ENCODE measurements at regions of chr5 and their contacts with region 1.

Region 1: DNA sequence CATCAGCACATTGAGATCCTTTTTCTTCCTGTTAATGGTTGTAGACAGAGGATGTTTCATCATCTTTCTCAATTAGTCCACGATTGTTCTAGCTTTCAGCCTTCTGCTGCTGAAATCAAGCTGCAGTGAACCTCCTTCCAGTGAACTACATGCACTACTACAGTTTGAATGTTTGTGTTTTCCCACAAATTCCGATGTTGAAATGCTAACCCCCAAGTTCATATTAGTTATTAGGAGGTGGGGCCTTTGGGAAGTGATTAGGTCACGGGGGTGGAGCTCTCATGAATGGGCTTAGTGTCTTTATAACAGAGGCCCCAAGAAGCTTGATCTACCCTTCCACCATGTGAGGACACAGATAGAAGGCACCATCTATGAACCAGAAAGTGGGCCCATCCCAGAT is 32.9 kb downstream of the NSG2 start:
- DNase-seq: no peak
- ATAC-seq: no peak
- H3K4me3 ChIP-seq: no peak overlapping the region
- H3K27ac ChIP-seq: no peak overlapping the region
- H3K4me1 ChIP-seq: no peaks in the 10 kb centered on the region
- H3K27me3 ChIP-seq: no peaks in the 10 kb centered on the region
- CTCF ChIP-seq: no peak

Region 2: DNA sequence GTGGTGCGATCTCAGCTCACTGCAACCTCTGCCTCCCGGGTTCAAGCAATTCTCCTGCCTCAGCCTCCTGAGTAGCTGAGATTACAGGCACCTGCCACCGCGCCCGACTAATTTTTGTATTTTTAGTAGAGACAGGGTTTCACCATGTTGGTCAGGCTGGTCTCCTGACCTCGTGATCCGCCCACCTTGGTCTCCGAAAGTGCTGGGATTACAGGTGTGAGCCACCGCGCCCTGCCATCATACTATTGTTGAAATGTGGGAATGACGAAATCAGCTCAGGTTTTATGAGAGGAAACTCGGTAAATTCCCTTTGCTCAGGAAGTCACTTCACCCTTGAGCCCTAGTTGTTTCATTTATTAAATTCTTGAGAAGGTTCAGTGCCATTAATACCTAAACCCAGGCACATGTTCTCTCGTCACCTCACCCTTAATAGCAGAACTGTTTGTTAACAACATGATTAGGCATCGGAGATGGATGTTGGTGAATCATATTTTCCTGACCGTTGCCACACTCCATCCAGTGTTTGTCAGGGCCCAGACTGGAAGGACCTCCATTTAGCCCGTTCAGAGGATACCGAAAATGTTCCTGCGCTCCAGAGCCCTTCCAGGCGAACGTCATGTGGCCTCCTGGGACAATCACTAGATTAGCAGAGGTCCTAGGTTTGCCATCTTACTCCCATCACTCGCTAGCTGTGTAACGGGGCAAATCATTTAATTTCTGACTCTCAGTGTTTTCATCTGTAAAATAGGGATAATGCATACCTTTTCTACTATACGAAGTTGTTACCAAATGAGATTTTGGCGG is 1042.3 kb before region 1 on chr5:
- intact Hi-C with region 1: loop called in 1 of 2 experiments (anchors 5 kb)
- DNase-seq: no peak
- ATAC-seq: no peak
- H3K4me3 ChIP-seq: no peak overlapping the region
- H3K27ac ChIP-seq: peak overlapping the region; percentile 24
- H3K4me1 ChIP-seq: no peaks in the 10 kb centered on the region
- H3K27me3 ChIP-seq: no peaks in the 10 kb centered on the region
- CTCF ChIP-seq: no peak

Measured in psoas muscle (tissue), 8 donors.